CD8-positive, alpha-beta T cell (primary cell): ENCODE measurements at regions of chr2 and their contacts with region 1.

Region 1: DNA sequence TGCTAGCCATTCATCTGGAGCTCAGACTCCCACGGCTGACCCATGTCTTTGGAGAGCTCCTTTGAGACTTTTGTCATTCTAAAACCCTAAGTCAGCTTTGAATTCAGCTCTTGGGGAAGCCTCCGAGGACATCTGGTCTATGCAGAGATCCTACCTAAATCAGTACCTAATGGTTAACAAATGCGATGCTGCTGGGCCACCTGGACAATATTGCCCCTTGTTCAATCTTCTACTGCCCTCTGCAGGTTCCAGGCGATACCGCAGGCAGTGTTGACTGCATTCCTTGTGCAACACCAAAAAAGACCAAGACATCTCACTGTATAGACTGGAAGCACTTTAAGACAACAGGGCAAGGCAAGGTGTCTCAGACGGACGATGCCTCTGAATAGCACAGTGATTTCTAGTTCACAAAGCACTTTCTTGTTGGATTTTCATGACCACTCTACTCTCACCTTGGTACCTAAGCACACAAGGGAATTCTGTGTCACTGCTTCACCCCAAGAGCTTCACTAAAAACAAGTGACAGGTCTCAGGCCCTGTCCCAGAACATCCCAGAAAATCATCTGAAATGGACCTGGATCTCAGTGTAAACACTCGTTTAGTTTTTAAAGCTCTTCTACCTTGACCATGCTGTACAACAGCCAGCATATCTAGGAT is 80.9 kb downstream of the XDH start:
- DNase-seq: peak; percentile 56 to 85 (median 72)
- ATAC-seq: peak; percentile 75
- H3K4me3 ChIP-seq: no peak overlapping the region
- H3K4me3 Mint-ChIP-seq: no peak overlapping the region
- H3K27ac ChIP-seq: no peak overlapping the region
- H3K27ac Mint-ChIP-seq: no peak overlapping the region
- H3K4me1 ChIP-seq: no peaks in the 10 kb centered on the region
- H3K4me1 Mint-ChIP-seq: no peaks in the 10 kb centered on the region
- H3K27me3 ChIP-seq: peaks cover 0 to 2% of the 10 kb centered on the region in 2 experiments
- H3K27me3 Mint-ChIP-seq: peaks cover 4% of the 10 kb centered on the region
- CTCF ChIP-seq: peak; percentile 98

Region 2: DNA sequence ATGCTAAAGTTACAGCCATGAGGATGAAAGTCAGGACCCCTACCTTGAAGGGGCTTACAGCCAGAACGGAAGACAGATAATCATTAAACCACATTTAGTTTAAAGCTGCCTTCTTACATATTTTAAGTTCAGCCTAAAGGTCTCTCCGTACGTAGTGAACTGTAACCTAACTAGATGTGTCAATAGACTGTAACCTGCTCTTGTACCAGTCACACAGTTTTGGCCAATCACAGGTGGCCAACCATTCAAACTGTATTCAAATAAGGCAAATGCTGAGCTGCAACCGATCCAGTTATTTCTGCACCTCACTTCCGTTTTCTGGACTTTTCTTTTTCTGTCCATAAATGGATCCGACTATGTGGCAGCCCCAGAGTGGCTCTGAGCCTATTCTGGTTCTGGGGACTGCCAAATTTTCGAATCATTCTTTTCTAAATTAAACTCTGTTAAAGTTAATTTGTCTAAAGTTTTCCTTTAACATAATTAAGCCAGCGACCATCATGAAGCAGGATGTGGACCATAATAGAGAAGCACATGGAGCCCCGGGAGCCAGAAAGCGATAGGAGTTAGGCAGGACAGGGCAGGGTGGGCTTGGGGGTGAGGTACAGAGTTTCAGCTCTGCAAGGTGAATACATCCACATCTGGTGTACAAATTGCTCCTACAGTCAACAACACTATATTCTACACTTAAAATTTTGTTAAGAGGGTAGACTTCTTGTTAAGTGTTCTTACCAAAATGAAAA is 1235.2 kb before region 1 on chr2:
- CTCF ChIA-PET with region 1: no interaction called
- POLR2A ChIA-PET with region 1: no interaction called
- intact Hi-C with region 1: loop called in 1 of 2 experiments (anchors 5 kb)
- DNase-seq: no peak
- ATAC-seq: no peak
- H3K4me3 ChIP-seq: no peak overlapping the region
- H3K4me3 Mint-ChIP-seq: no peak overlapping the region
- H3K27ac ChIP-seq: no peak overlapping the region
- H3K27ac Mint-ChIP-seq: no peak overlapping the region
- H3K4me1 ChIP-seq: no peaks in the 10 kb centered on the region
- H3K4me1 Mint-ChIP-seq: no peaks in the 10 kb centered on the region
- H3K27me3 ChIP-seq: no peaks in the 10 kb centered on the region
- H3K27me3 Mint-ChIP-seq: peaks cover 22% of the 10 kb centered on the region
- CTCF ChIP-seq: no peak

Region 3: DNA sequence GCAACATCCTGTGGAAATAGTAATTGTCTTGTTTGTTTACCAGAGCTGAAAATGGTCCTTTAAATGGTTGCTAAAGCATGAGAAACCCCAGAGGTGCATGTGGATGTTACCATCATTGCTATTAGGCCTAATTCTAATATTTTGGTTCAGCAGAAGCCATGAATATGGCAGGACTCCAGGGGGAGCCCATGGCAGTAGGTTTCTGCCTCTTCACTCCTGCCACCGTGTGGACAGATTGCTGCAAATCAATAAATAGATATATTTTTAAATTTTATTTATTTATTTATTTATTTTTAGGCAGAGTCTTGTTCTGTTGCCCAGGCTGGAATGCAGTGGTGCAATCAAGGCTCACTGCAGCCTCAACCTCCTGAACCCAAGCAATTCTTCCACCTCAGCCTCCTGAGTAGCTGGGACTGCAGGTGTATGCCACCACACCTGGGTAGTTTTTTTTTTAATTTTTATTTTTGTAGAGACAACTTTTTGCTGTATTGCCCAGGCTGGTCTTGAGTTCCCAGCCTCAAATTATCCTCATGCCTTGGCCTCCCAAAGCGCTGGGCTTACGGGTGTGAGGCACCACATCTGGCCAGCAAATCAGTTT is 471.5 kb before region 1 on chr2:
- CTCF ChIA-PET with region 1: interaction called, 37 read pairs
- POLR2A ChIA-PET with region 1: no interaction called
- intact Hi-C with region 1: loop called in 1 of 2 experiments (anchors 1 kb)
- DNase-seq: peak in 5 of 9 experiments; percentile 25 to 66 (median 43)
- ATAC-seq: peak; percentile 40
- H3K4me3 ChIP-seq: no peak overlapping the region
- H3K4me3 Mint-ChIP-seq: no peak overlapping the region
- H3K27ac ChIP-seq: no peak overlapping the region
- H3K27ac Mint-ChIP-seq: no peak overlapping the region
- H3K4me1 ChIP-seq: no peaks in the 10 kb centered on the region
- H3K4me1 Mint-ChIP-seq: peaks cover 2% of the 10 kb centered on the region
- H3K27me3 ChIP-seq: no peaks in the 10 kb centered on the region
- H3K27me3 Mint-ChIP-seq: peaks cover 6% of the 10 kb centered on the region
- CTCF ChIP-seq: peak; percentile 60

Region 4: GRCh38 chr2:31107591-31108300 is 225.9 kb before region 1 on chr2:
- CTCF ChIA-PET with region 1: no interaction called
- POLR2A ChIA-PET with region 1: no interaction called
- intact Hi-C with region 1: loop called in 1 of 2 experiments (anchors 10 kb)
- DNase-seq: no peak
- ATAC-seq: no peak
- H3K4me3 ChIP-seq: no peak overlapping the region
- H3K4me3 Mint-ChIP-seq: no peak overlapping the region
- H3K27ac ChIP-seq: no peak overlapping the region
- H3K27ac Mint-ChIP-seq: no peak overlapping the region
- H3K4me1 ChIP-seq: no peaks in the 10 kb centered on the region
- H3K4me1 Mint-ChIP-seq: no peaks in the 10 kb centered on the region
- H3K27me3 ChIP-seq: no peaks in the 10 kb centered on the region
- H3K27me3 Mint-ChIP-seq: peaks cover 34% of the 10 kb centered on the region
- CTCF ChIP-seq: no peak

Region 5: DNA sequence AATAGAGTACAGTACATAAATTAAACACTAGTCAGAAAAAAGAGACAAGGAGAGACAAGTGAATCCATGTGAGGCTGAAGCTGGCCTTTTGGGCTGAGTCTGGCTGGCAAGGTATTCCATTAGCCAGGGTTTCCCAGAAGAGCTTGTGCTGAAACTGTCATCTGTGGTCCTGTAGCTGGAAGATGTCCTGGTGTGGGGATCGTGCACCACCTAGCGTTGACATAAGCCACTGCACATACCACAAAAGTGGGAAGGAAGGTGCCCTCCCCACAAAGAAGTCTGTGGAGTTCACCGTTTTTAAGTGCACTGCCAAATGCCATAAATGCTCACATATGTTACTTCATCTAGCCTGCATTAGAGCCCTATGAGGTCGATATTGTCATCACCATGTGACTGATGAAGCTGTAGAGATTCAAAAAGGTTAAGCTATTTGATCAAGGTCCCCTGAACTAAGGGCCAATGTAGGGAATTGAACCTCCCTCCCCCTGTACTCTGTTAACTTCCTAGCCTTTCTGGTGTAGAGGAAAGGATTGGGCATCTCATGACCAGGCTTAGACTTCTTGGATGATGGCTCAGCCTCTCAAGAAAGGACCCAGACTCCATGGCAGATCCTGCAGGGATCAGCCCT is 163.5 kb before region 1 on chr2:
- CTCF ChIA-PET with region 1: interaction called, 23 read pairs
- POLR2A ChIA-PET with region 1: no interaction called
- intact Hi-C with region 1: loop called (anchors 1 to 5 kb)
- DNase-seq: peak in 8 of 9 experiments; percentile 18 to 69 (median 40)
- ATAC-seq: peak; percentile 58
- H3K4me3 ChIP-seq: no peak overlapping the region
- H3K4me3 Mint-ChIP-seq: no peak overlapping the region
- H3K27ac ChIP-seq: no peak overlapping the region
- H3K27ac Mint-ChIP-seq: no peak overlapping the region
- H3K4me1 ChIP-seq: no peaks in the 10 kb centered on the region
- H3K4me1 Mint-ChIP-seq: no peaks in the 10 kb centered on the region
- H3K27me3 ChIP-seq: no peaks in the 10 kb centered on the region
- H3K27me3 Mint-ChIP-seq: no peaks in the 10 kb centered on the region
- CTCF ChIP-seq: peak; percentile 80

Region 6: GRCh38 chr2:31318361-31319336 is 15.0 kb before region 1 on chr2:
- CTCF ChIA-PET with region 1: interaction called, 29 read pairs
- POLR2A ChIA-PET with region 1: interaction called, 4 read pairs
- intact Hi-C with region 1: no loop called
- DNase-seq: peak in 8 of 9 experiments; percentile 13 to 56 (median 23)
- ATAC-seq: peak; percentile 42
- H3K4me3 ChIP-seq: no peak overlapping the region
- H3K4me3 Mint-ChIP-seq: peak overlapping the region; percentile 57
- H3K27ac ChIP-seq: peak overlapping the region in 1 of 2 experiments; percentile 64
- H3K27ac Mint-ChIP-seq: peak overlapping the region; percentile 89
- H3K4me1 ChIP-seq: peaks cover 39% of the 10 kb centered on the region
- H3K4me1 Mint-ChIP-seq: peaks cover 51% of the 10 kb centered on the region
- H3K27me3 ChIP-seq: no peaks in the 10 kb centered on the region
- H3K27me3 Mint-ChIP-seq: no peaks in the 10 kb centered on the region
- CTCF ChIP-seq: no peak

Region 7: GRCh38 chr2:31354837-31355236 is 21.2 kb after region 1 on chr2:
- CTCF ChIA-PET with region 1: interaction called, 18 read pairs
- POLR2A ChIA-PET with region 1: no interaction called
- intact Hi-C with region 1: no loop called
- DNase-seq: no peak
- ATAC-seq: no peak
- H3K4me3 ChIP-seq: no peak overlapping the region
- H3K4me3 Mint-ChIP-seq: no peak overlapping the region
- H3K27ac ChIP-seq: no peak overlapping the region
- H3K27ac Mint-ChIP-seq: no peak overlapping the region
- H3K4me1 ChIP-seq: no peaks in the 10 kb centered on the region
- H3K4me1 Mint-ChIP-seq: no peaks in the 10 kb centered on the region
- H3K27me3 ChIP-seq: no peaks in the 10 kb centered on the region
- H3K27me3 Mint-ChIP-seq: peaks cover 34% of the 10 kb centered on the region
- CTCF ChIP-seq: no peak